ENCODE measurements at regions of chr1 and their contacts with region 1.

Region 1: GRCh38 chr1:9004700-9005394 is 21.4 kb downstream of the SLC2A7 start:
- DNase-seq: peak; percentile 88
- H3K4me3 ChIP-seq: no peak overlapping the region
- H3K27ac ChIP-seq: no peak overlapping the region
- H3K4me1 ChIP-seq: no peaks in the 10 kb centered on the region
- H3K27me3 ChIP-seq: no peaks in the 10 kb centered on the region
- CTCF ChIP-seq: peak; percentile 96

Region 2: GRCh38 chr1:8873506-8874229 is 131.2 kb before region 1 on chr1:
- CTCF ChIA-PET with region 1: interaction called, 8 read pairs
- POLR2A ChIA-PET with region 1: interaction called, 11 read pairs
- intact Hi-C with region 1: no loop called
- DNase-seq: peak; percentile 99
- H3K4me3 ChIP-seq: peak overlapping the region; percentile 25
- H3K27ac ChIP-seq: peak overlapping the region; percentile 75
- H3K4me1 ChIP-seq: peaks cover 41% of the 10 kb centered on the region
- H3K27me3 ChIP-seq: no peaks in the 10 kb centered on the region
- CTCF ChIP-seq: no peak

Region 3: DNA sequence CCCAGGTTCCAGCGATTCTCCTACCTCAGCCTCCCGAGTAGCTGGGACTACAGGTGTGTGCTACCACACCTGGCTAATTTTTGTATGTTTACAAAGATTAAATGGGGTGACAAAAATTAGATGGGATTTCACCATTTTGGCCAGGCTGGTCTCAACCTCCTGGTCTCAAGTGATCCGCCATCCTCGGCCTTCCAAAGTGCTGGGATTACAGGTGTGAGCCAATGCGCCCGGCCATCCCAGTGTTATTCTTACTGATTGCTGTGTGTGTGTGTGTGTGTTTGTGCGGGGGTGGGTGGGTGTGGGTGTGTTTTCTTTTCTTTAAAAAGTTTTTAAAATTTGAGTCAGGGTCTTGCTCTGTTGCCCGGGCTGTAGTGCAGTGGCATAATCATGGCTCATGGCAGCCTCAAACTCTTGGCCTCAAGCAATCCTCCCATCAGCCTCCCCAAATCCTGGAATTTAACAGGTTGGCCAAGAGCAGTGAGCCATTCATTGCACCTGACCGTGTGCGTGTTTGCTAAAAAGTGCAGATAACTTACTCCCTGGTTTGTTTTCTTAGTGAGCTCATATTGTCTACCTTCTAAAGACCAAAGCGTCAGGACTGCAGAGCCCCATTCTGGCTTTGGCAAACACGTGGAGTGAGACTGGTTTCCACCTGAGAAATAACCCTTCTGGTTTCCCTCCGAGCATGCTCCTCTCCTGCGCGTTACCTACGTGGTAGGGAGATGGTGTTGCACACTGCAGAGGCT is 91.6 kb before region 1 on chr1:
- CTCF ChIA-PET with region 1: interaction called, 38 read pairs
- POLR2A ChIA-PET with region 1: no interaction called
- intact Hi-C with region 1: loop called (anchors 5 kb)
- DNase-seq: no peak
- H3K4me3 ChIP-seq: no peak overlapping the region
- H3K27ac ChIP-seq: no peak overlapping the region
- H3K4me1 ChIP-seq: no peaks in the 10 kb centered on the region
- H3K27me3 ChIP-seq: no peaks in the 10 kb centered on the region
- CTCF ChIP-seq: no peak

Region 4: DNA sequence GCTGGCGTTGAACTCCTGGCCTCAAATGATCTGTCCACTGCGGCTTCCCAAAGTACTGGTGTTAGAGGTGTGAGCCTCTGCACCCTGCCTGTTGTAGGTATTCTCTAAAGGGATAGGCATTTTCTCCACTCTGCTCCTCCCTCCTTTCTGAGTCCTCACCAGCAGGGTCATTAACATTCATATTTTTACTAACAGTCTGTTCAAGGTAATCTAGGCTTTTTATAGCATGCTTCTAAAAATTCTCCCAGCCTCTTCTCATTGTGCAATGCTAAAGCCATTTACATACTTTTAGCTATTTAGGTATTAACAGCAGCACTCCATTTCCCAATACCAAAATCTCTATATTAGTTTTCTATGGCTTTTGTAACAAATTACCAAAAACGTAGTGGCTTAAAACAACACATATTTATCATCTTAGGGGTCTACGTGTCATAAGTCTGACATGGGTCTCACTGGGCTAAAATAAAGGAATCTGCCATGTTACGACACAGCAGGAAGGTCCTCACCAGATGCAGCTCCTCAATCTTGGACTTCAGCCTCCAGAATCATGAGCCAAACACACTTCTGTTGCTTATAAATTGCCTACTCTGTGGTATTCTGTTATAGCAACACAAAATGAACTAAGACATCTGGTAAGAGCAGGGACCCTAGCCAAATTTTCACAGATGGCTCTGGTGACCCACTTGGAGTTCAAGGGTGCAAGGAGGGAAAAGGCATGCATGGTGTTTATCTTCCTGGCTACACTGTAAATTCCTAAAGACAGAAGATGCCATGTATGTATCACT is 24.3 kb after region 1 on chr1:
- CTCF ChIA-PET with region 1: interaction called, 10 read pairs
- POLR2A ChIA-PET with region 1: no interaction called
- intact Hi-C with region 1: no loop called
- DNase-seq: no peak
- H3K4me3 ChIP-seq: no peak overlapping the region
- H3K27ac ChIP-seq: no peak overlapping the region
- H3K4me1 ChIP-seq: no peaks in the 10 kb centered on the region
- H3K27me3 ChIP-seq: no peaks in the 10 kb centered on the region
- CTCF ChIP-seq: no peak

Region 5: DNA sequence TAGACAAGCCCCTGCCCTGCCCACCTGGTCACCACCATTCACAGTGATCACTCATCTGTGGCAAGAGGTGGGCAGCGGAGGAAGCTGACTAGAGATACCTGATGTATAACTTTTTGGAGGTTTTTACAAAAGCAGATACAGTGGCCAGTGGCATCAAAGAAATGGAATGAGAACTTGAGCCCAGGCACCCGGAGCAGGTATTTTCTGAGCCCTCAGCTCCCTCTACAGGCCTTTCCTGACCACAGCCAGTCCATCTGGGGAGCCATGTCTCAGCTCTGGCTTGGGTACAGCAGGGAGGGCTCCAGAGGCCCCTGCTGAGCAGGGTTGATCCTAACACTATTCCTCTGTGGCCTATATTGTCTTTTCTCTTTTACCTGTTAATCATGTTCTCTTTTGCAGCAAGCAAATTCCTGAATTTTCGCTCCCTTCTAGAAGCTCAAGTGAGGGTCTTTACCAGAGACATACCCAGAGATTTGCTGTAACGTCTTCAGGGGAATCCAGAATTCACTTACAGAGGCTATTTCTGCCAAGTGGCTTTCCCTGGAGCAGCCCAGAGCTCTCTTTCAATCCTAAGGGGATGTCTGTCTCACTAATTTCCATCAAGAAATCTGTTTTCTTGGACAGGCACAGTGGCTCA is 96.8 kb after region 1 on chr1:
- CTCF ChIA-PET with region 1: interaction called, 5 read pairs
- POLR2A ChIA-PET with region 1: no interaction called
- intact Hi-C with region 1: loop called (anchors 5 kb)
- DNase-seq: peak; percentile 53
- H3K4me3 ChIP-seq: no peak overlapping the region
- H3K27ac ChIP-seq: no peak overlapping the region
- H3K4me1 ChIP-seq: no peaks in the 10 kb centered on the region
- H3K27me3 ChIP-seq: no peaks in the 10 kb centered on the region
- CTCF ChIP-seq: peak; percentile 65

Region 6: GRCh38 chr1:9249534-9250410 is 244.9 kb after region 1 on chr1:
- CTCF ChIA-PET with region 1: no interaction called
- POLR2A ChIA-PET with region 1: no interaction called
- intact Hi-C with region 1: no loop called
- DNase-seq: peak; percentile 35
- H3K4me3 ChIP-seq: no peak overlapping the region
- H3K27ac ChIP-seq: no peak overlapping the region
- H3K4me1 ChIP-seq: peaks cover 20% of the 10 kb centered on the region
- H3K27me3 ChIP-seq: peaks cover 30% of the 10 kb centered on the region
- CTCF ChIP-seq: peak; percentile 64

Region 7: GRCh38 chr1:9449106-9449627 is 444.3 kb after region 1 on chr1:
- CTCF ChIA-PET with region 1: no interaction called
- POLR2A ChIA-PET with region 1: no interaction called
- intact Hi-C with region 1: no loop called
- DNase-seq: peak; percentile 21
- H3K4me3 ChIP-seq: no peak overlapping the region
- H3K27ac ChIP-seq: peak overlapping the region; percentile 74
- H3K4me1 ChIP-seq: peaks cover 14% of the 10 kb centered on the region
- H3K27me3 ChIP-seq: no peaks in the 10 kb centered on the region
- CTCF ChIP-seq: no peak